CD8-positive, alpha-beta T cell (primary cell): ENCODE measurements at regions of chr3 and their contacts with region 1.

Region 1: DNA sequence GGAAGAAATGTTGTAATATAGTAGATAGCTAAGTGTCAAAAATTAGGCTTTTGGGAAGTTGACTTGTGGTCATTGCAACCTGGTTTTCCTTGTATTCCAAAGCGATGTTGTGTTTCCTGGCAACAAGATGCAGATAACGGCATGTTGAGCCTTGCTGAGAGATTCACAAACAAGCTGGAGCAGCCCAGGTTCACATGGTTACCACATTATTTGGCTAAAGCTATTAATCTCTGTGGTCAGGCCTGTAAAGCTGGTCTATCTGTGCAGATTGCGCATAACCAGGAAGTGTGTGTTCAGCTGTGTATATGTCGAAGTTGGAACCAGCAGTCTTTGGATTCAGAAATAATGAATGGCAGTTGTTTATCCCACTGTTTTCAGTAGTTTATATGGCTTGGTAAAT is 6.6 kb downstream of the TIPARP start:
- DNase-seq: peak in 2 of 9 experiments; percentile 36 to 55
- ATAC-seq: no peak
- H3K4me3 ChIP-seq: no peak overlapping the region
- H3K4me3 Mint-ChIP-seq: peak overlapping the region; percentile 49
- H3K27ac ChIP-seq: no peak overlapping the region
- H3K27ac Mint-ChIP-seq: no peak overlapping the region
- H3K4me1 ChIP-seq: peaks cover 71% of the 10 kb centered on the region
- H3K4me1 Mint-ChIP-seq: peaks cover 90% of the 10 kb centered on the region
- H3K27me3 ChIP-seq: no peaks in the 10 kb centered on the region
- H3K27me3 Mint-ChIP-seq: no peaks in the 10 kb centered on the region
- CTCF ChIP-seq: no peak

Region 2: DNA sequence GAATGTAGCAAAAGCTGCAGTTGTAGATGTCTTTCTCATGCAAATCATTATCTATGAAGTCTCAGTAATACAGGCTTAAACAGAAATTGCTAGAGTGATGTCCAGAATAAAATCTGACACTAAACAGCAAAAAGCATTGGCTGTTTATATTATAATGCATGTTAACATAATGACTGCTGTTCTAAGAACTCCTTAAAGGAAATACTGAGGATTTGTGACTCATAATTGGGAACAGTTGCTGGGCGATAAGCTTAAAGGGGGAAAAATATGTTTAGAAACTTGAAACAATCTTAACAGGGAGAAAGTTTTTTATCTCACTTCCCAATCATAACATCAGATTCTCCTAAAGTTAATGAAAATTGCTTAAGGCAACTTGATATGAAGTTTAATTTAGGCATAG is 10.9 kb after region 1 on chr3:
- CTCF ChIA-PET with region 1: no interaction called
- POLR2A ChIA-PET with region 1: interaction called, 3 read pairs
- intact Hi-C with region 1: loop called in 1 of 2 experiments (anchors 1 kb)
- DNase-seq: no peak
- ATAC-seq: no peak
- H3K4me3 ChIP-seq: no peak overlapping the region
- H3K4me3 Mint-ChIP-seq: no peak overlapping the region
- H3K27ac ChIP-seq: no peak overlapping the region
- H3K27ac Mint-ChIP-seq: no peak overlapping the region
- H3K4me1 ChIP-seq: no peaks in the 10 kb centered on the region
- H3K4me1 Mint-ChIP-seq: peaks cover 52% of the 10 kb centered on the region
- H3K27me3 ChIP-seq: no peaks in the 10 kb centered on the region
- H3K27me3 Mint-ChIP-seq: no peaks in the 10 kb centered on the region
- CTCF ChIP-seq: no peak